Lower leg skin (tissue), 4 donors: ENCODE measurements at regions of chr1 and their contacts with region 1.

Region 1: GRCh38 chr1:21278208-21278859 is 11.9 kb downstream of the ECE1 start:
- DNase-seq: no peak
- H3K4me3 ChIP-seq: no peak overlapping the region
- CTCF ChIP-seq: no peak
- POLR2A ChIP-seq: no peak

Region 2: DNA sequence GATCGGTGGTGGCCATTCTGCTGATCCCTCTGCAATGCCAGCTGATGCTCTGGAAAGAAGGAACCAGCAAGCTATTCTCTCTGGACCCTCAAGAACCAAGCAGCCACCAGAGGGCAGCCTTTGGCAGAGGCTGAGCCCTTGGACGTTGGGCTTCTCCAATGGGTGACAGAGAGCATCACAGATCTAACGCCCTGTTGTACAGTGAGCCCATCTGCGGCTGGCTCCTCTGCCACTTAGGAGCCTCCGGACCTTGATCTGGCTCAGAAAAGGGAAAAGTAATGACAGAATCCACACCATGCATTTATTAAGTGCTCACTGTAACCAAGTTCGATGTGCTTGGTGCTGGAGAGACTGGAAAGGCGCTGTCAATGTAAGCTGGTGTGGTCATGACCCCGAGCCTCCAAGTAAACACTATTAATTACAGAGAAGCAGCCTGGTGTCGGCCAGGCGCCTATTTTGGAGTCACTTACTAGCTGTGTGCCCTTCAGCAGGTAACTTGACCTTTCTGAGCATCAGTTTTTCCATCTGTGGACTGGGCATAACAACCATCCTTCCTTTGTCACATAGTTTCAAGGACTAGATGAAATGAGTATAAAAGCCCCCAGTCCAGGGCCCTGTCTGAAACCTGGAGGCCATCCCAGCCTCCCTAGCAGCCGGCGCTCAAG is 22.9 kb before region 1 on chr1:
- intact Hi-C with region 1: no loop called
- DNase-seq: peak; percentile 87 to 98
- H3K4me3 ChIP-seq: no peak overlapping the region
- CTCF ChIP-seq: peak in 1 of 3 donors; percentile 85
- POLR2A ChIP-seq: no peak

Region 3: GRCh38 chr1:21302747-21303715 is 24.7 kb after region 1 on chr1:
- intact Hi-C with region 1: no loop called
- DNase-seq: no peak
- H3K4me3 ChIP-seq: no peak overlapping the region
- CTCF ChIP-seq: no peak
- POLR2A ChIP-seq: no peak

Region 4: GRCh38 chr1:22121411-22121911 is 843.1 kb after region 1 on chr1:
- intact Hi-C with region 1: loop called (anchors 5 kb)
- DNase-seq: peak in 1 of 2 donors; percentile 82
- H3K4me3 ChIP-seq: no peak overlapping the region
- CTCF ChIP-seq: no peak
- POLR2A ChIP-seq: no peak